ENCODE measurements at regions of chr9 and their contacts with region 1.

Region 1: DNA sequence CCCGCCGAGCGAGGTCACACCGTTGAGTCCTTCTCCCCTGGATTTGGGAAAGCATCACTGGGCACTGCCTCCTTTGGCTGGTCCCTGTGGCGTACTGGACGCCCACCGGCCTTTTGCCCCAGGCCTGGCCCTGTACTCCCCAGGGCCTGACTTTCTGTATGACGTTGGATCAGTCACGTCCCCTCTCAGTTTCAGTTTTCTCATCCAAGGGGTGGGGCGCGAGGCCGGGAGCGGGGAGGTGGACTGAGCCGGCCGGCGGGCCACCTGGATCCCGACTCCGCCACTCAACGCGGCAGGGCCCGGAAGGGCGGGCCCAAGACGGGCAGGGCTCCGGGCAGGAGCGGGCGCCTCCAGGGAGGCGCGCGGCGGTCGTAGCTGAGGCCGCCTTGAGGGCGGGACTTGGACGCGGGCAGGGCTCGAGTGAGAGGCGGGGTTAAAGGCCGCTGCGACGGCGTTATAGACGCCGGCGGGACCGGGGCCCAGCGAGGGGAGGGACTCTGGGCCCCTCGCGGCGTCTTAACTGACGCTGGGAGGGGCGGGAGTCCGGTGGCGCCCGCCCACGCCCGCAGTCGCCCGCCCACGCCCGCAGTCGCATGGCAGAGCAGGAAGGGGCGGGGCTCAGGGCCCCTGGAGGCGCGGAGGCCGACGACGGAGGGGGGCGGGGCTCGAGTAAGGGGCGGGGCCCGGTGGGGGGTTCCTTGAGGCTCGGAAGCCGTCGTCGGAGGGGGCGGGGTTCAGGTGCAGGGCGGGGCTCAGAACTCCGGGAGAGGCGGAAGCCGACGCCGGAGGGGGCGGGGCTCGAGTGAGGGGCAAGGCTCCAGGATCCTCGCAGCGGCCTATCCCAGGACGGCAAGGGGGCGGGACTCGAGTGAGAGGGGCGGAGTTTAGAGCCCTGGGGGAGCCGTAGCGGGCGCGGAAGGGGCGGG is 549 bp upstream of the CARD19 start:
- DNase-seq: peak; percentile 100
- H3K4me3 Mint-ChIP-seq: peak overlapping the region; percentile 79
- H3K27ac Mint-ChIP-seq: peak overlapping the region; percentile 98
- H3K4me1 Mint-ChIP-seq: peaks cover 65% of the 10 kb centered on the region
- H3K27me3 Mint-ChIP-seq: no peaks in the 10 kb centered on the region

Region 2: DNA sequence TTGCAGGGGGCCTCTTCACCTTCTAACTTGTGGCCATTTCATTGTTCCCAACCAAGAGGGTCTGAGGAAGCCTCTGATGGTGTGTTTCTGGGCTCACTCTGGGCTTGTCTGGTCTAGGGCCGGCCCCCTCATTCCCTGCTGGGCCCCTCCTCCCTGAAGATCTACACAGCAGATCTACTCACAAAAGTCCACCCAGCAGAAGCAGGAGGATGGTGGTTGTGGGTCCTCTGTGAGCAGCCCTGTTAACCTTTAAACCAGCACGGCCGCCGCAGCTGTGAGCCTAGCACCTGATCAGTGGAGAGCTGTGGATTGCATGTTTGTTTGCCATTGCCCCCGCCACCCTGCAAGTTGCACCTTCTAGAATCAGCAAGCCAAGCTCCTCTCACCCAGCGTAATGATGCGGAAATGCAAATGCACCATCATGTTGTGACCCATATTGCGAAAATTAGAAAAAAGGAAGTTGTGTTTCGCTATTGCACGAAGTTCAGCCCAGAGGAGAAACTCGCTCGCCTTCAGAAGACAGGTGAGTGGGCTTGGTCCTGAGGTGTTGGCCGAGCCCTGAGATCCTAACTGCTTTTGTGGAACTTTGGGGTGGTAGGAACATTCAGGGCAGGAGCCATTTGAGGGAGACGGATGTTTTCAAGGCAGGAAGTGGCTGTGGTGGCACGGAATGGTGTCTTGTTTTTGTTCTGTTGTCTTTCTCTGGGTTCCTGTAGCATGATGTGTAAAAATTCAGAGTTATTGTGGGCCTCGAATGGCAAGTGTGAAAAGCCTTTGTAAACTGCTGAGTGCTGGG is 131.4 kb before region 1 on chr9:
- intact Hi-C with region 1: loop called (anchors 1 kb)
- DNase-seq: peak; percentile 93
- H3K4me3 Mint-ChIP-seq: peak overlapping the region; percentile 92
- H3K27ac Mint-ChIP-seq: peak overlapping the region; percentile 98
- H3K4me1 Mint-ChIP-seq: peaks cover 48% of the 10 kb centered on the region
- H3K27me3 Mint-ChIP-seq: no peaks in the 10 kb centered on the region

Region 3: GRCh38 chr9:93064392-93065134 is 30.9 kb before region 1 on chr9:
- intact Hi-C with region 1: loop called (anchors 1 kb)
- DNase-seq: peak; percentile 97
- H3K4me3 Mint-ChIP-seq: peak overlapping the region; percentile 86
- H3K27ac Mint-ChIP-seq: peak overlapping the region; percentile 96
- H3K4me1 Mint-ChIP-seq: peaks cover 76% of the 10 kb centered on the region
- H3K27me3 Mint-ChIP-seq: no peaks in the 10 kb centered on the region

Region 4: GRCh38 chr9:93108291-93109041 is 13.0 kb after region 1 on chr9:
- intact Hi-C with region 1: loop called (anchors 1 kb)
- DNase-seq: peak; percentile 81
- H3K4me3 Mint-ChIP-seq: peak overlapping the region; percentile 55
- H3K27ac Mint-ChIP-seq: peak overlapping the region; percentile 81
- H3K4me1 Mint-ChIP-seq: peaks cover 41% of the 10 kb centered on the region
- H3K27me3 Mint-ChIP-seq: no peaks in the 10 kb centered on the region

Region 5: DNA sequence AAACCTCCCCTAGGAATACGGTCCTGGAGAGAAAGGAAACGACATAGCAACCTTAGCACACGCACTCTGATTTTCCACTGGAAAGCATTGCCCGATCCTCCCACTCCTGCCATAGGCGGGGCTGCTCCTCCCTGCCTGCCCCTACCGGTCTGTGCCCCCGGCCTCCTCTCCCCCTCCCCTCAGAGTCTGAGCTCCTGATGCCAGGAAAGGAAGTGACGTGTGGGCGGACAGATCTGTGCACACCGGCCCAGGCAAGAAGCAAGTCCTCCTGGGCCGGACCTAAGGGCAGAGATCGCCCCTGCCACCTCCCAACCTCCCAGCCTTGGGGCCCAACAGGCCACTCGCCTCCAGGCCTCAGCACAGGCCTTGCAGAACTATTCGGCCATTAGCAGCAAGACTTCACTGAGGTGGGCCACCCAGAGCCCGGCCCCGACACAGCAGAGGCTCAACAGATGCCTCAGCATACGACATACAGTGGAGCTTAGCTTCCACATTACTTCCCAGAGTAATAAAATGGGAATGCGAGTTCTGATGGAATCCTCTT is 31.4 kb after region 1 on chr9:
- intact Hi-C with region 1: no loop called
- DNase-seq: no peak
- H3K4me3 Mint-ChIP-seq: peak overlapping the region; percentile 55
- H3K27ac Mint-ChIP-seq: peak overlapping the region; percentile 76
- H3K4me1 Mint-ChIP-seq: peaks cover 47% of the 10 kb centered on the region
- H3K27me3 Mint-ChIP-seq: no peaks in the 10 kb centered on the region

Region 6: DNA sequence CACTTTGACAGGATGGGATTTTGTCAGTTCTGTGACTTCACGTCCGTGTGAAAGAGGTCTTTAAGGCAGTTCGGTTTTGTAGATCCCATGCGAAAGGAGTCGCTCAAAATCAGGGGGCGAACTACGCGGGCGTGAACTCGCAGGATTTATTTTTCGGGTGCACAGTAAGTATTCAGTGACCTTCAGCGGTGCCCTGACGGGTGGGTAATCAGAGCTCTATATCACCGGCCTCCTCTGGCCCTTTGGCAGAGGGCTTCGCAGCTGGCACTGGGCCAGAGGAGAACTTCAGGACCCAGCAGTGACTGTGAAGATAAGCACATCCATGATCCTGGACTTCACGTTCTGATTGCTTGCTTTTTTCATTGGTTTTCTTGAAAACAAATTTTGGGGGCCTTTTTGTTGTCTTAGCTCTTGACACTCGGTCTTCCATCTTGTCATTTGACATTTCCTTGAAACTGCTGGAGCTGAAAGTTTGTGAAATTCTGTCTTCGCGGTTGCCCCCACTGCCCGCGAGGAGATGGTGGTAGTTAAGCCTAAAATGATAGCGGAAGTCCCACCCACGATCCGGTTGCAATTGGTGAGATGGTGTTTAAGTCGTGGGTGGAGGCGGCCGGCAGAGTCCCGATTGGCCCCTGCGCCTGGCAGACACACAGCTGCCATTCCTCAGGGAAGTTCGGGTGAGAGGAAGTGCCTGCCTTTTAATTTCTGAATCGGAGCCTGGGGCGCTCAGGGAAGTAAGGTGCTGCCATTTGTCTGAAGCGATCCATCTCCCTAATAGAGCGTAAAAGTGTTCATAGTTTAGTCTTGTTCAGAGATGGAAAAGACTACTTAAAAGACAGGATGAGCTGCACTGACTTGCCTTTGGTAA is 357.8 kb after region 1 on chr9 and contains the start of gene FAM120AOS:
- intact Hi-C with region 1: loop called (anchors 1 kb)
- DNase-seq: peak; percentile 95
- H3K4me3 Mint-ChIP-seq: peak within 1 kb of the TSS; percentile 92
- H3K27ac Mint-ChIP-seq: peak within 1 kb of the TSS; percentile 94
- H3K4me1 Mint-ChIP-seq: peaks cover 41% of the 10 kb centered on the region
- H3K27me3 Mint-ChIP-seq: no peaks in the 10 kb centered on the region
- total RNA-seq, gene FAM120AOS: 31.6 and 33.9 TPM in 2 replicates